A673 (cell line): ENCODE measurements at regions of chr11 and their contacts with region 1.

Region 1: DNA sequence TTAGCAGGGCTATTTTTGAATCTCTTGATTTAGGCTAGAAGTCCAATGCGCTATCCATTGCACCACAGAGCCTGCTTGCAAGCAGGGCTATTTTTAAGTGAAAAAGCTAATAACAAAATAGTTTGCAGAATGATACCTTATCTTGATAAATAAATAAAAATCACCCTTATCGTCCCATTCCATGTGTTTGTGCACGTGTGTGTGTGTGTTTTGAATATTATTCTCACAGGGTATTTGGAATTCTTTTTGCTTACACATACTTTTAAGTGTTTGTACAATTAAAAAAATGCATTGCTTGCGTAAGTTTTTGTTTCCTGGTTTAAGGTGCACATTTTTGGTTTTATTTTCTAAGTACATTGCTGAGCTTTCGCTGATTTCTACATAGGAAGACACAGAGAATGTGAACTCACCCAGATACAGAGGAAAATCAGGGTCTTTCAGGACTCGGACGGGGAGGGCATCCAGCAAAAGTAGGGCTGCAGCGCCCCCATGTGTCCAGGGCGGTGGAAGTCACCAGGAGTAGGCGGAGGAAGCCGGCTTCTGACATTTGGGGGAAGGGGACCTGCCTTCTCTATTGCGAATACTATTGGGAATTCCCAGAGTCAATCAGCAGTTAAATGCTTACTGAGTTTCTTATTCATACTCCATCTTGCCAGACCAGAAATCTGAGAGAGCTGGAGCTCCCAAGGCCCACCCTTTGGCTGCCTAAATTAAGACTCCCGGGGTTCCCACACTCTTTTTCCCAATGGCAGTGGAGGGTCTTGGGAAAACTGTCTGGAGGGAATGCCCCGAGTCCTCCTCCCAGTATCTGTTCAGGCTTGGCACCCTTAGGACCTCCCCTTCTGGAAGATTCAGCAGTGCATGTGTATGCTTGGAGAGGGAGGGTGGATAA is 27.2 kb downstream of the SLC1A2 start:
- DNase-seq: peak; percentile 94
- H3K4me3 ChIP-seq: no peak overlapping the region
- H3K27ac ChIP-seq: no peak overlapping the region
- H3K4me1 ChIP-seq: peaks cover 18% of the 10 kb centered on the region
- H3K27me3 ChIP-seq: peaks cover 4% of the 10 kb centered on the region
- CTCF ChIP-seq: peak; percentile 100

Region 2: GRCh38 chr11:34512840-34513681 is 879.1 kb before region 1 on chr11:
- CTCF ChIA-PET with region 1: interaction called, 4 read pairs
- POLR2A ChIA-PET with region 1: no interaction called
- intact Hi-C with region 1: loop called (anchors 1 kb)
- DNase-seq: peak; percentile 89
- H3K4me3 ChIP-seq: no peak overlapping the region
- H3K27ac ChIP-seq: no peak overlapping the region
- H3K4me1 ChIP-seq: no peaks in the 10 kb centered on the region
- H3K27me3 ChIP-seq: peaks cover 4% of the 10 kb centered on the region
- CTCF ChIP-seq: peak; percentile 98

Region 3: GRCh38 chr11:34840736-34841386 is 551.3 kb before region 1 on chr11:
- CTCF ChIA-PET with region 1: interaction called, 3 read pairs
- POLR2A ChIA-PET with region 1: no interaction called
- intact Hi-C with region 1: loop called (anchors 5 kb)
- DNase-seq: peak; percentile 88
- H3K4me3 ChIP-seq: no peak overlapping the region
- H3K27ac ChIP-seq: no peak overlapping the region
- H3K4me1 ChIP-seq: no peaks in the 10 kb centered on the region
- H3K27me3 ChIP-seq: peaks cover 3% of the 10 kb centered on the region
- CTCF ChIP-seq: peak; percentile 98

Region 4: DNA sequence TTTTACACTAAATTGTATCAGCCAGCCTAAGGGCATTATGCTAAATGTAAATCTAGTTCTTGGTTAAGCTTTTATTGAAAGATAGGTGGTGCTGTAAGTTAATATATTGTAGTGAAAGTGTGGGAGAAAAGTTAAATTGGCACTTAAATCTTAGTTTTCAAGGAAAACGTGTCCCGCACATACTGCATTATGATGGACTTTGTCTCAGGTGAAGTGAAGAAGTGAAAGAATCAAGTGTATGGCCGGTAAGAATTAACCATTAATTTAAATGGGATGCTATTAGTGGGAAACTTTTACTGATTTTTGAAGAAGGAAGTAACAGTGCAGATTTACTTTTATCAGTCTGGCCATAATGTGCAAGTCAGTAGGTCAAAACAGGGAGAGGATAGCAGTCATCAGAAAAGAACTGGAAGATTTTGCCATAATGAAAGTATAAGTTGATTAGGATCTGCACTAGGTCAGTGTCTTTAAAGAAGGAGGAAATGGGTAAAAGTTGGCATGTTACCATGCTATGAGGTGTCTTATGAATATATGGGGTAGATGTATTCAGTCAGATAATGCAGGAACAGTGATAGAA is 394.1 kb before region 1 on chr11:
- CTCF ChIA-PET with region 1: interaction called, 5 read pairs
- POLR2A ChIA-PET with region 1: no interaction called
- intact Hi-C with region 1: loop called (anchors 1 kb)
- DNase-seq: peak; percentile 51
- H3K4me3 ChIP-seq: no peak overlapping the region
- H3K27ac ChIP-seq: no peak overlapping the region
- H3K4me1 ChIP-seq: peaks cover 13% of the 10 kb centered on the region
- H3K27me3 ChIP-seq: no peaks in the 10 kb centered on the region
- CTCF ChIP-seq: peak; percentile 80